ENCODE measurements at regions of chr7 and their contacts with region 1.

Region 1: DNA sequence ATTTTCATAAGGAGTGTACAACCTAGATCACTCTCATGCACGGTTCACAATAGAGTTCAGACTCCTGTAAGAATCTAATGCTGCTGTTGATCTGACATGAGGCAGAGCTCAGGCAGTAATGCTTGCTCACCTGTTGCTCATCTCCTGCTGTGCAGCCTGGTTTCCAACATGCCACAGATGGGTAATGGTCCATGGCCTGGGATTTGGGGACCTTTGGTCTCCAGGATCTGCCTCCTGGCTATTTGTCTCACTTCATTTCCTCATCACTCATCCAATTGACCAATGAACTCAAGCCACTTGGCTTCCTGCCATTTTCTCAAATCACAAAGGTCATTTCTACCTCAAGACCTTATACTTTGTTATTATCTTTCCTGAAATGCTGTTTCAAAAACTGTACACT is 786.1 kb downstream of the ANKRD7 start:
- DNase-seq: no peak
- H3K4me3 ChIP-seq: no peak overlapping the region
- H3K27ac ChIP-seq: no peak overlapping the region
- H3K4me1 ChIP-seq: no peaks in the 10 kb centered on the region
- H3K27me3 ChIP-seq: no peaks in the 10 kb centered on the region
- CTCF ChIP-seq: no peak
- POLR2A ChIP-seq: no peak

Region 2: DNA sequence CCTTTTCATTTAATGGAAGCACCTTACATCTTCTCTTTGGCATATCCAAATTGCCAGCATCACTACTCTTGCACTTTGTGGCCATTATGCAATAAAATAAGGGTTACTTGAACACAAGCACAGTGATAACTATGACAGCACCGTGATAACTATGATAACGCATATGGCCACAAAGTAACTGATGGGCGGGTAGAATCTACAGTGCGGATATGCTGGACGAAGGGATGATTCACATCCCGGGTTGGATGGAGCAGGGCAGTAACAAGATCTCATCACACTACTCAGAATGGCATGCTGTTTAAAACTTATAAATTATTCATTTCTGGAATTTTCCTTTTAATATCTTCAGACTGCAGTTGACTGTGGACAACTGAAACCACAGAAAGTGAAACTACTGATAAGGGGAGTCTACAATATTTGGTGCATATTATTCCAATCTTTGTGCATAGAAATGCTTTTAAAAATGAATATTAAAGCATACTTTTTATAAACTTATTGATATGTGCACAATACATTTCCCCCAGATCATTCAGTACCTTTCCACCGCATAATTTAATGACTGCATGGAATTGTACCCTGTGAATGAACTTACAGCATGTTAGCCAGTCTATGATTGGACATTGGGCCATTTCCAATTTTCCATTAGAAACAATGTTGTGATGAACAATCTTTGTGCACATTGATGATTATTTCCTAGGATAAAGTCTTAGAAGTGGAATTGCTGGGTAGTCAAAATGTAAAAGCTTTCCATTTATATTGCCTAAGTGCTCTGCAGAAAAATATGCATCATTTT is 1824.2 kb before region 1 on chr7:
- intact Hi-C with region 1: no loop called
- DNase-seq: no peak
- H3K4me3 ChIP-seq: no peak overlapping the region
- H3K27ac ChIP-seq: no peak overlapping the region
- H3K4me1 ChIP-seq: no peaks in the 10 kb centered on the region
- H3K27me3 ChIP-seq: no peaks in the 10 kb centered on the region
- CTCF ChIP-seq: no peak
- POLR2A ChIP-seq: no peak

Region 3: DNA sequence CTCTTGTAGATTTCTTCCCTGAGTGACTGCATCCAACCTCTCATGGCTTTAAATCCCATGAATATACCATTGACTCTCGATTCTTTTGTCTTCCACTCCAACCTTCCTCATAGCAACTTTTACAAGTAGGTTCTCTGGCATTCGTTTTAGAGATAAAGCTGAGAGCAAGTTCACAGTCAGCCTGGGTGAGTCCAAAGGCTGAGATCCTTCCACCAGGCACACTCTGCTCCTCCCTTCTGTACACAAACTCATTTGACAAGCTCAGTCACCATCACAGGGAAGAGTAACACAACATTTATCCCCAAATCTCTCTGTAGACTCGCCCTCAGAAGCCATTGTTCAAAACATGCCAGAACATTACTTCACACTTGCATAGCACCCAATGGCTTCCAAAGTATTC is 1148.3 kb before region 1 on chr7:
- intact Hi-C with region 1: loop called (anchors 5 kb)
- DNase-seq: no peak
- H3K4me3 ChIP-seq: no peak overlapping the region
- H3K27ac ChIP-seq: no peak overlapping the region
- H3K4me1 ChIP-seq: no peaks in the 10 kb centered on the region
- H3K27me3 ChIP-seq: no peaks in the 10 kb centered on the region
- CTCF ChIP-seq: no peak
- POLR2A ChIP-seq: no peak

Region 4: GRCh38 chr7:118195837-118196474 is 814.7 kb before region 1 on chr7:
- intact Hi-C with region 1: no loop called
- DNase-seq: peak; percentile 60
- H3K4me3 ChIP-seq: no peak overlapping the region
- H3K27ac ChIP-seq: no peak overlapping the region
- H3K4me1 ChIP-seq: peaks cover 5% of the 10 kb centered on the region
- H3K27me3 ChIP-seq: no peaks in the 10 kb centered on the region
- CTCF ChIP-seq: peak in 3 of 4 experiments; percentile 56 to 59 (median 58)
- POLR2A ChIP-seq: no peak

Measured in prostate gland (tissue), 2 donors.